Spleen (tissue), 13 donors: ENCODE measurements at regions of chr2 and their contacts with region 1.

Region 1: GRCh38 chr2:231905026-231905425 is 21.2 kb downstream of the NPPC start:
- DNase-seq: peak; percentile 56
- H3K4me3 ChIP-seq: no peak overlapping the region
- H3K27ac ChIP-seq: no peak overlapping the region
- H3K4me1 ChIP-seq: no peaks in the 10 kb centered on the region
- H3K27me3 ChIP-seq: peaks cover 0 to 28% (median 0%) of the 10 kb centered on the region in 7 donors
- CTCF ChIP-seq: peak in 1 of 11 experiments; percentile 1
- POLR2A ChIP-seq: no peak

Region 2: GRCh38 chr2:232211743-232212686 is 307.0 kb after region 1 on chr2:
- intact Hi-C with region 1: no loop called
- DNase-seq: no peak
- H3K4me3 ChIP-seq: no peak overlapping the region
- H3K27ac ChIP-seq: no peak overlapping the region
- H3K4me1 ChIP-seq: peaks cover 0 to 9% (median 0%) of the 10 kb centered on the region in 6 donors
- H3K27me3 ChIP-seq: no peaks in the 10 kb centered on the region
- CTCF ChIP-seq: no peak
- POLR2A ChIP-seq: no peak

Region 3: GRCh38 chr2:232438951-232439757 is 534.1 kb after region 1 on chr2:
- intact Hi-C with region 1: loop called (anchors 5 kb)
- DNase-seq: peak; percentile 72
- H3K4me3 ChIP-seq: no peak overlapping the region
- H3K27ac ChIP-seq: no peak overlapping the region
- H3K4me1 ChIP-seq: peaks cover 0 to 14% (median 3%) of the 10 kb centered on the region in 6 donors
- H3K27me3 ChIP-seq: peaks cover 0 to 21% (median 0%) of the 10 kb centered on the region in 7 donors
- CTCF ChIP-seq: peak in 8 of 11 experiments; percentile 12 to 82 (median 60)
- POLR2A ChIP-seq: no peak